K562 (cell line): ENCODE measurements at regions of chr12 and their contacts with region 1.

Region 1: DNA sequence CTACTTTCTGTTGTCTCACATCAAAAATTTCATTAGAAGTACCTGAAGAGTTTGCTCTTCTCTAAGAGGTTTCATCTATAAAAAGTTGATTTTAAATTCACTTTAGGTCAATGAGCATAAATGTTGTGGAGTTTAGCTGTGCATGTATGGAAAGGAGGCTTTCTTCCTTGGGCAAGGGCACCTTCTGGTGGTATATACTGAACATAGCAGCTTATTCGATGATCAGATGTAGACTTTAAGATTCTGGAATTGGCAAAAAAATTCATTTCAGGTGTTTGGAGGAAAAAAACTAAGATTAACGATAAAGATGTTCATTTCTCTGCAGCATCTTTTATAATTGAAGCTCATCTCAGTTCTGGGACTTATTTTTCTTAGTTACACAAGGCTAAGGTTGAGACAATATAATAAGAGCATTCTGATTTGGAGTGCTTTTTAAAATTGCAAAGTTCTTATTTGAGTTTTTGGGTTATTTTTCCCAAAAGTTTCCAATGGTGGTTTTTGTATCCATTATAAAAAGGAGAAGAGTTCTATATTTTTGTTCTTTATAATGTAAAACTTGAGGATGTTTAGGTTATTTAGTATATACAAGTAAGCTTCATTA is 46.8 kb downstream of the TMEM117 start:
- DNase-seq: peak; percentile 36 to 54 (median 38)
- ATAC-seq: peak; percentile 93
- H3K4me3 ChIP-seq: no peak overlapping the region
- H3K27ac ChIP-seq: no peak overlapping the region
- H3K4me1 ChIP-seq: no peaks in the 10 kb centered on the region
- H3K27me3 ChIP-seq: no peaks in the 10 kb centered on the region
- CTCF ChIP-seq: peak; percentile 55 to 88 (median 81); a peak in 5 of 6 replicates
- EP300 ChIP-seq: no peak
- POLR2A ChIP-seq: no peak
- RAD21 ChIP-seq: peak; percentile 97

Region 2: GRCh38 chr12:43444940-43445564 is 437.6 kb before region 1 on chr12:
- CTCF ChIA-PET with region 1: no interaction called
- POLR2A ChIA-PET with region 1: no interaction called
- in situ Hi-C with region 1: no loop called
- intact Hi-C with region 1: loop called (anchors 5 kb)
- DNase-seq: peak; percentile 4 to 63 (median 26)
- ATAC-seq: 0 out of 3 replicates have a peak, but pooled peaks have one; percentile 56
- H3K4me3 ChIP-seq: no peak overlapping the region
- H3K27ac ChIP-seq: no peak overlapping the region
- H3K4me1 ChIP-seq: no peaks in the 10 kb centered on the region
- H3K27me3 ChIP-seq: no peaks in the 10 kb centered on the region
- CTCF ChIP-seq: peak; percentile 30 to 54 (median 46); a peak in 5 of 6 replicates
- EP300 ChIP-seq: no peak
- POLR2A ChIP-seq: no peak
- RAD21 ChIP-seq: peak; percentile 55 to 56

Region 3: GRCh38 chr12:43758728-43759563 is 123.7 kb before region 1 on chr12 and contains the starts of genes IRAK4 and PUS7L:
- CTCF ChIA-PET with region 1: interaction called, 6 read pairs
- POLR2A ChIA-PET with region 1: no interaction called
- in situ Hi-C with region 1: no loop called
- intact Hi-C with region 1: loop called (anchors 1 kb)
- DNase-seq: peak; percentile 93 to 98 (median 94)
- ATAC-seq: peak; percentile 92
- H3K4me3 ChIP-seq: peak within 1 kb of the TSS; percentile 73
- H3K27ac ChIP-seq: peak within 1 kb of the TSS; percentile 92
- H3K4me1 ChIP-seq: peaks cover 4 to 13% of the 10 kb centered on the region in 2 experiments; a peak in 3 of 5 replicates
- H3K27me3 ChIP-seq: no peaks in the 10 kb centered on the region
- CTCF ChIP-seq: peak; percentile 51 to 66 (median 65); a peak in 5 of 6 replicates
- EP300 ChIP-seq: peak; percentile 16; the same call in 1 of the 2 replicates
- POLR2A ChIP-seq: peak; percentile 86
- RAD21 ChIP-seq: peak; percentile 15 to 32; a peak in 2 of 4 replicates
- polyA plus RNA-seq, gene IRAK4: 10.8 to 12.8 TPM
- polyA plus RNA-seq, gene PUS7L: 11.4 to 46.0 TPM

Region 4: DNA sequence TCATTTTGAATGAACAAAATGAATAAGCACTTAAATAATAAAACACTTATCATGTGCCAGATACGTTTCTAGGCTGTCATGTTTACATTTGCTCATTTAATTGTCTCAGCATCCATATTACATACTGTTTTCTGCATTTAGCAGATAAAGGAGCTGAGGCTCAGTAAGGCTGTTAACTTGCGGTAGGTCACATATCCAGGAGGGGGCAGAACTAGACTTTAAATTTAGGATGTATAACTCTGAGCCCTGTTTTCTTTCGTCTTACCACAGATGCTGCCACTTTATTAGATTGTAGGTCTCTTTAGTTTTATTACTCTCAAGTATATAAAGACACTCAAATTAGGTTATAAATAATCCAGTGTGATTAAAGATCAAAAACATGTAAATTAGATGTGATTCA is 106.2 kb before region 1 on chr12:
- CTCF ChIA-PET with region 1: interaction called, 44 read pairs
- POLR2A ChIA-PET with region 1: no interaction called
- in situ Hi-C with region 1: loop called (anchors 5 kb)
- intact Hi-C with region 1: loop called (anchors 1 kb)
- DNase-seq: peak in 2 of 4 experiments; percentile 37 to 39
- ATAC-seq: peak; percentile 93
- H3K4me3 ChIP-seq: no peak overlapping the region
- H3K27ac ChIP-seq: no peak overlapping the region
- H3K4me1 ChIP-seq: no peaks in the 10 kb centered on the region
- H3K27me3 ChIP-seq: no peaks in the 10 kb centered on the region
- CTCF ChIP-seq: peak; percentile 35 to 61 (median 44); a peak in 4 of 6 replicates
- EP300 ChIP-seq: no peak
- POLR2A ChIP-seq: no peak
- RAD21 ChIP-seq: peak; percentile 64 to 67; a peak in 3 of 4 replicates